ENCODE measurements at regions of chr1 and their contacts with region 1.

Region 1: GRCh38 chr1:208652296-208653160 is 408.3 kb upstream of the PLXNA2 start:
- DNase-seq: peak; percentile 46
- H3K4me3 Mint-ChIP-seq: no peak overlapping the region
- H3K27ac Mint-ChIP-seq: no peak overlapping the region
- H3K4me1 Mint-ChIP-seq: no peaks in the 10 kb centered on the region
- H3K27me3 Mint-ChIP-seq: peaks cover 51% of the 10 kb centered on the region
- CTCF ChIP-seq: peak; percentile 69

Region 2: DNA sequence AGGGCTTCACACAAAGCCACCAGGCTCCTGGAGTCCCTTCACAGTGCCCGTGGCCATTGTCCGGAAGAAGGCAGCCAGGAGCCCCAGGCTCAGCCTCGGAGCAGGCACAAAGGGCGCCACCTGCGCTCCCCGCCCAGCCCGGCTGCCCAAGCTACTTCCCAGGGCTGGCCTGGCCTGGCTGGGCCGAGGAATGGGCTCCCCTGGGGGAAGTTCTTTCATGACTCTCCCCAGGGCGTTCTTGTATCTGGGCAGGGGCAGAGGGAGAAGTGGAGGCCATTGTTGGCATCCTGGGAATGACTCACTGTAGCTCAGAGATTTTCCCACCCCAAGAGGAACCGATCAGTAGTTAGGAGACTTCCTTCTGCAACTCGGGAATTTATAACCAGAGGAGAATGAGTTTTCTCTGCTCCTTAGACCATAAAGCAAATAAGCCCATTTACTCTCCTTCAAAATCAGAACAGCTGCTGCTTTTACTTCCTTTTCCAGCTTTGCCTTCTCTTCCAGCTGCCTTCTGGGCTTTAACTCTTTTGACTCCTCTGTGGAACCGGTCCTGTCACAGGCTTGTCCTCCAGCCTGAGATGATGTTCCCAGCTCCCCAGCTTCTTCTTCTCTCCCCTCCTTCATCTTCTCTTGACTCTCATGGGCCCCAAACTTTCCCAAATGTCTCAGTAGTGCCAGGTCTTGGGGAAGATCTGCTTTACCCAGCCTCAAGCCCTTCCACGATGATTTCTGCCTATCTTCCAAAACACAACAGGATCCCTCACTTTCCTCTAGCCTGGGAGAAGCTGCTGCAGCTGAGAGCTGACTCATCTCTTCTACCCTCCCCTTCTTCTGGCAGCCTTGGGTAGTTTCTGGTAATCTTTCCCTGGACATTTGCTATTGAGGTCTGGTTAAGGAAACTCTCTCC is 622.9 kb before region 1 on chr1:
- CTCF ChIA-PET with region 1: no interaction called
- intact Hi-C with region 1: loop called (anchors 10 kb)
- DNase-seq: no peak
- H3K4me3 Mint-ChIP-seq: no peak overlapping the region
- H3K27ac Mint-ChIP-seq: no peak overlapping the region
- H3K4me1 Mint-ChIP-seq: no peaks in the 10 kb centered on the region
- H3K27me3 Mint-ChIP-seq: peaks cover 5% of the 10 kb centered on the region
- CTCF ChIP-seq: no peak

Region 3: DNA sequence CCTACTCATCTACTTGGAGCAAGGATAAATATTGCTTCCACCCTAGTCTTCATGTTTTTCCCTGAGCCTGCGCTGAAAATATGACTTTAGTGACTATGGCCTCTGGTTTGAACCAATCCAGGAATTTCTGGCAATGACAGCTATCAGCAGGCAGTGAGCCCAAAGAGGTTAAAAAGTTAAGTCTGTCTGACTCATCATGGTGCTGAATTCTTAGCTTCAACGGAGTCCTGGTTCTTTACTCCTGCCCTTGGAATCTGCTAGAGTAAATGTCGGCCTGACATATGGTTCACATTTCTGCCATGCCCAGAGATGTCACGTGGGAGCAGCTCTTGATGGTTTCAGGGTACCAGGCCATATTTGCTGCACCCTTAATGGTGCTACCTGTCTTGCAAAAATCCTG is 56.8 kb before region 1 on chr1:
- CTCF ChIA-PET with region 1: no interaction called
- intact Hi-C with region 1: no loop called
- DNase-seq: no peak
- H3K4me3 Mint-ChIP-seq: no peak overlapping the region
- H3K27ac Mint-ChIP-seq: no peak overlapping the region
- H3K4me1 Mint-ChIP-seq: no peaks in the 10 kb centered on the region
- H3K27me3 Mint-ChIP-seq: peaks cover 69% of the 10 kb centered on the region
- CTCF ChIP-seq: no peak

Region 4: DNA sequence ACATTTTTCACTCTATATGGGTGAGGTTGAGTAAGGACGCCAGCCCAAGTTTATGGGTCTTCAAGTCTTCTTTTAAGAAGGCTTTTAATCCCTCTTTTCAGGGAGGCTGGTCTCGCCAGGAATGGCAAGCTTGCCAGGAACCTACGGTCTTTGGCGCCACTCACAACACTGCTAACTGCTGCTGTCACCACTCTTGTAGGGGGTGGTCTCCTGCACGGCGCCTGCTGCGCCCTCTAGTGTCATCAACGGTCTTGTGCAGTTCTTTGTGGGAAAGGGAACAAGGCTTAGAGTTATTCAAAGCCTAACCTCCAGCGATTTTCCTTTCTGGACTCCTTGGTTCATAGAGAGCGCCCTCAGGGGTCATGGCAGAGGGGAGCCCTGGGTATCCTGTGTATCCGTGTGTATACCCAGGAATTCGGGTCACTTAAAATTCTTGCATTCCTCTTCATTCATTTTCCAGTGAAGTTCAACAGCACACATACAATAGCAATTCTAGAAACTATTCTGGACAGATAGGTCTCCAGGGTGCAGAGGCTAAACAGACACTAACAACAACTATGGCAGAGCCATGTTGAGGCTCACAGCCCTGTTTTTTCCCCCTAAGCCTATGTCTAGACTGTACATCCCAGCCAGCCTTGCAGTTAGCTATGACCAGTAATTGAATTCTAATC is 538.2 kb after region 1 on chr1:
- CTCF ChIA-PET with region 1: no interaction called
- intact Hi-C with region 1: loop called (anchors 1 kb)
- DNase-seq: peak; percentile 51
- H3K4me3 Mint-ChIP-seq: no peak overlapping the region
- H3K27ac Mint-ChIP-seq: no peak overlapping the region
- H3K4me1 Mint-ChIP-seq: no peaks in the 10 kb centered on the region
- H3K27me3 Mint-ChIP-seq: no peaks in the 10 kb centered on the region
- CTCF ChIP-seq: peak; percentile 51

Region 5: DNA sequence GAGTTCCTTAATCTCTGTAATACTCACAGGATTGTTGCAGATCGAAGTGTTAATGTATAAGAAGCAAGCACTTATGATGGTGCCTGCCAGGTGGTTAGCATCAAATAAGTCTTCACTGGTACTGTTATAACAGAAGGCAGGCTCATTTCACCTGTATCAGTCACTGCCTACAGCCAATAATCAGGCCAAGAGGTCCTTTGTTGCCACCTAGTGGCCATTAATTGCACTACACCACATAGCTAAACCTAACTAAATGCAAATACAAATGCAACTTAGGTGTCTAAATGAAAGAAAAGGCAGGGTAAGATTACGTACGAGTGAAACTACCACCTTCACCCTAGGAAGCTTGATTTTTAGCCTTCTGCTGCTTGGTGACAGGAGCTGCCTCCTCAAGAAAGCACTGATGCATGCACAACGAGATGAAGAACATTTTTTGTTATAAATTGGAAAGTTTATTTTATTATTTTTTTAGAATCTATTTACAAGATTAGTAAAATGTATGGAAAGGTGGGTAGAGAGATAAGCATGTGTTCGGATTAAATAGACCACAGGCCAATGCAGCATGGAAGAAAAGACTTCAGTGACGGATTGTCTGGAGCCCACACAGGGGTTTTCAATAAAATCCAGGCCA is 596.2 kb after region 1 on chr1:
- CTCF ChIA-PET with region 1: interaction called, 10 read pairs
- intact Hi-C with region 1: loop called (anchors 1 kb)
- DNase-seq: peak; percentile 79
- H3K4me3 Mint-ChIP-seq: no peak overlapping the region
- H3K27ac Mint-ChIP-seq: no peak overlapping the region
- H3K4me1 Mint-ChIP-seq: no peaks in the 10 kb centered on the region
- H3K27me3 Mint-ChIP-seq: peaks cover 42% of the 10 kb centered on the region
- CTCF ChIP-seq: peak; percentile 95

Region 6: DNA sequence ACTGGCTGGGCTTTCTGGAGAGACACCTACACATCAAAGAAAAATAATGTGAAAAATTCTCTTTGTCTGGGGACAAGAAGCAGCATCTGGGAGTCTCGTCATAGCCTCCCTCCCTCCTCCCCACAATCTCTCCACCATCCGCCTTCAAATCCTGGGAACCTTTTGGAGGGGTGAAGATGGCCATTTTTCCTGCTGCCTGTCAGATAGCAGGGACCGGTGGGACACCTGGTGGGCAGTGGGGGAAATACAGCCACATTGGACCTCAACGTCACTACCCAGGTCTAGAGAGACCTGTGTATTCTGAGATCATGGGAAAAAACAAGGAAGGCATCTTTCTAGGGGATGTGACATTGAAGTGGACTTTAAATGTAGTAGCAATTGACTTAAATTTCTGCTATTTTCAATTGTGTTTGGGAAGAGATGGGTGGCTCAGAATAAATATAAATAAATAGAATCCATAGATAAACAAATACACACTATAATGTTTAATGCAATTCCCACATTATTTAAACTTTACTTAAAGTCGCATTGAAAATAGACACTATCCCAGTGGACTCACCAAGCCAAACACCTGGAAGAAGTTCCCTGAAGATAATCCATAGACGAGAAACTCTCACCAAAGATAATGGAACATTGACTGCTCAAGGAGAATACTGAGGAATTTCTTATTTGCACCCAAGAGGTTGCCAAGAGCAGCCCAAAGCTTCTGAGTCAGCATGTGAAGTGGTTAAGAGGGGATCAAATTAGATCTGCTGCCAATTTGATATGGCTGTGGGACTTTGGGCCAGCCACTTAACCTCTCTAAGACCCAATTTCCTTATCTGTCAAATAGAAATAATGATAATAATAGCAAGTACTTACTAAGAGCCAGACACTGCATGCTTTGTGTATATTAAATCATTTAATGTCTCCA is 783.4 kb after region 1 on chr1:
- CTCF ChIA-PET with region 1: no interaction called
- intact Hi-C with region 1: loop called (anchors 1 kb)
- DNase-seq: peak; percentile 94
- H3K4me3 Mint-ChIP-seq: no peak overlapping the region
- H3K27ac Mint-ChIP-seq: no peak overlapping the region
- H3K4me1 Mint-ChIP-seq: peaks cover 20% of the 10 kb centered on the region
- H3K27me3 Mint-ChIP-seq: peaks cover 17% of the 10 kb centered on the region
- CTCF ChIP-seq: peak; percentile 92

Measured in Calu3 (cell line).